PC-3 (cell line): ENCODE measurements at regions of chr7 and their contacts with region 1.

Region 1: DNA sequence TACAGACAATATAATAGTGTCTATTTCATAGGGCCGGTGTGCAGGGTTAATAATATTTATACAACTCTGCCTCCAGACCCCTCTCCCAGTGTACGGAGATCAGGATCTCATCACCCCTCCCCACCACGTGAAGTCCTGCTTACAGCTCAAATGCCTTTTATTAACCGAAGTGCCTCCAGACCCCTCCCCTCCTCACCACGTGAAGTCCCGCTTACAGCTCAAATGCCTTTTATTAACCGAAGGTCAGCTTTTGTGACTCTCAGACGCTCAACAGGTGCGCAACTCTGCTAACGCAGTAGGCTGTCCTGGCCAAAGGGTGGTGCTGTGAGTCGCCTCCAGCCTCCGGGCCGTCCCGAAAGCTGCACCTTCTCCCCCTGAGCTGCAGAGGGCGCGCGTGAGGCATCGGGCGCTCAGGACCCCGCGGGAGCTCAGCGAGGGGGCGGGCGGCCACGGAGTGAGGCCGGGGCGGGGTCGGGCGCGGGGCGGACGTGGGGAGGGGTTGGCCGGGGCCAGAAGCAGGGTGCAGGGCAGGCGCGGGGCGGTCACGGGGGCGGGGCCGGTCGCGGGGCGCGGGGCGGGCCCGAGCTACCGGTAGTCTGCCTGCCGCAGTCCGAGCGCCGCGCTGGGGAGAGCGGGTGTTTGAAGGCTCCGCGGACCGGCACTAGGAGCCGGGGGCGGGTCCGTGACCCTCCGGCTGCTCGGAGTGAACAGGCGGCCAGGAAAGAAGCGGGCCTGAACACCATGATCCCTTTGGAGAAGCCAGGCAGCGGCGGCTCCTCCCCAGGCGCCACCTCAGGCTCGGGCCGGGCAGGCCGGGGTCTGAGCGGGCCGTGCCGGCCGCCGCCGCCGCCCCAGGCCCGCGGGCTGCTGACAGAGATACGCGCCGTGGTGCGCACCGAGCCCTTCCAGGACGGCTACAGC is at the start of gene STK17A:
- DNase-seq: peak; percentile 92
- ATAC-seq: peak; percentile 72
- H3K4me3 ChIP-seq: peak within 1 kb of the TSS; percentile 95
- H3K27ac ChIP-seq: peak within 1 kb of the TSS; percentile 74
- H3K4me1 ChIP-seq: peaks cover 25% of the 10 kb centered on the region
- H3K27me3 ChIP-seq: no peaks in the 10 kb centered on the region
- CTCF ChIP-seq: peak; percentile 94
- total RNA-seq, gene STK17A: 75.4 and 82.5 TPM in 2 replicates

Region 2: GRCh38 chr7:43071604-43072003 is 511.2 kb before region 1 on chr7:
- CTCF ChIA-PET with region 1: no interaction called
- POLR2A ChIA-PET with region 1: interaction called, 10 read pairs
- intact Hi-C with region 1: no loop called
- DNase-seq: peak; percentile 25
- ATAC-seq: no peak
- H3K4me3 ChIP-seq: no peak overlapping the region
- H3K27ac ChIP-seq: no peak overlapping the region
- H3K4me1 ChIP-seq: no peaks in the 10 kb centered on the region
- H3K27me3 ChIP-seq: no peaks in the 10 kb centered on the region
- CTCF ChIP-seq: peak; percentile 64

Region 3: DNA sequence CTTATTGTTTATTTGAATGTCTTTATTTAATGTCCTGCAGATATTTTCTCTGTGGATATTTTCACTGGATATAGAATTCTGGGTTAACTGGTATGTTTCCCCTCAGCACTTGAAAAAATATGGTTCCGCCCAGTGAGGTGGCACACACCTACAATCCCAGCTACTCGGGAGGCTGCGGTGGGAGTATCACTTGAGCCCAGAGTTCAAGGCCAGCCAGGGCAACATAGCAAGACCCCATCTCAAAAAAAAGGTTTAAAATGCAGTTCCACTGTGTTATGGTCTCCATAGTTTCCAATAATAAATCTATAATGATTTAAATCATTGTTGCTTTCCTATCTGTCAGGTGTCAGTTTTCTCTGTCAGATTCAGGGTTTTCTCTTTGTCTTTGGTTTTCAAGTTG is 165.3 kb before region 1 on chr7:
- CTCF ChIA-PET with region 1: no interaction called
- POLR2A ChIA-PET with region 1: no interaction called
- intact Hi-C with region 1: no loop called
- DNase-seq: no peak
- ATAC-seq: no peak
- H3K4me3 ChIP-seq: no peak overlapping the region
- H3K27ac ChIP-seq: no peak overlapping the region
- H3K4me1 ChIP-seq: no peaks in the 10 kb centered on the region
- H3K27me3 ChIP-seq: no peaks in the 10 kb centered on the region
- CTCF ChIP-seq: no peak

Region 4: DNA sequence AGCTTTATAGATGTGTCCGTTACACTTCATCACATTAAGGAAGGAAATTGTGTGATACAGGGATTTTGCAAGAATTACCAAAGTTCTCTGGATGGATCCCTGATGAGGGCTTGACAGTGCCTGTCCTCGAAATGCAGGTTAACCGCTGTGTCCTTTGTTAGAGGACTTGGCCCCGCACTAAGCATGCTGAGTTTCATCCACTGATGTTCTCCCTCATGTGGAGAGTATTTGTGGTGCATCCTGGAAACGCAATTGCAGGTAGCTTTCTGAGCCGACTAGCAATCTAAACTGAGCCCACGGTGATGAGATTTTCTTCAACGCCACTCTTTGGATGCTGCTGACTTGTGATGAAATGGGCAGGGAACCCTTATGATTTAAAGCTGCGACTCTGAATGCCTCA is 71.7 kb before region 1 on chr7:
- CTCF ChIA-PET with region 1: no interaction called
- POLR2A ChIA-PET with region 1: no interaction called
- intact Hi-C with region 1: no loop called
- DNase-seq: peak; percentile 15
- ATAC-seq: no peak
- H3K4me3 ChIP-seq: no peak overlapping the region
- H3K27ac ChIP-seq: no peak overlapping the region
- H3K4me1 ChIP-seq: no peaks in the 10 kb centered on the region
- H3K27me3 ChIP-seq: no peaks in the 10 kb centered on the region
- CTCF ChIP-seq: peak; percentile 23; the same call in 1 of the 2 replicates

Region 5: GRCh38 chr7:43612599-43613589 is 30.1 kb after region 1 on chr7:
- CTCF ChIA-PET with region 1: interaction called, 8 read pairs
- POLR2A ChIA-PET with region 1: interaction called, 35 read pairs
- intact Hi-C with region 1: loop called (anchors 2 kb)
- DNase-seq: no peak
- ATAC-seq: no peak
- H3K4me3 ChIP-seq: no peak overlapping the region
- H3K27ac ChIP-seq: no peak overlapping the region
- H3K4me1 ChIP-seq: peaks cover 8% of the 10 kb centered on the region
- H3K27me3 ChIP-seq: no peaks in the 10 kb centered on the region
- CTCF ChIP-seq: no peak

Region 6: GRCh38 chr7:43639858-43640491 is 57.2 kb after region 1 on chr7:
- CTCF ChIA-PET with region 1: interaction called, 11 read pairs
- POLR2A ChIA-PET with region 1: interaction called, 13 read pairs
- intact Hi-C with region 1: no loop called
- DNase-seq: peak; percentile 50
- ATAC-seq: peak; percentile 41
- H3K4me3 ChIP-seq: no peak overlapping the region
- H3K27ac ChIP-seq: peak overlapping the region; percentile 55
- H3K4me1 ChIP-seq: peaks cover 27% of the 10 kb centered on the region
- H3K27me3 ChIP-seq: no peaks in the 10 kb centered on the region
- CTCF ChIP-seq: no peak

Region 7: DNA sequence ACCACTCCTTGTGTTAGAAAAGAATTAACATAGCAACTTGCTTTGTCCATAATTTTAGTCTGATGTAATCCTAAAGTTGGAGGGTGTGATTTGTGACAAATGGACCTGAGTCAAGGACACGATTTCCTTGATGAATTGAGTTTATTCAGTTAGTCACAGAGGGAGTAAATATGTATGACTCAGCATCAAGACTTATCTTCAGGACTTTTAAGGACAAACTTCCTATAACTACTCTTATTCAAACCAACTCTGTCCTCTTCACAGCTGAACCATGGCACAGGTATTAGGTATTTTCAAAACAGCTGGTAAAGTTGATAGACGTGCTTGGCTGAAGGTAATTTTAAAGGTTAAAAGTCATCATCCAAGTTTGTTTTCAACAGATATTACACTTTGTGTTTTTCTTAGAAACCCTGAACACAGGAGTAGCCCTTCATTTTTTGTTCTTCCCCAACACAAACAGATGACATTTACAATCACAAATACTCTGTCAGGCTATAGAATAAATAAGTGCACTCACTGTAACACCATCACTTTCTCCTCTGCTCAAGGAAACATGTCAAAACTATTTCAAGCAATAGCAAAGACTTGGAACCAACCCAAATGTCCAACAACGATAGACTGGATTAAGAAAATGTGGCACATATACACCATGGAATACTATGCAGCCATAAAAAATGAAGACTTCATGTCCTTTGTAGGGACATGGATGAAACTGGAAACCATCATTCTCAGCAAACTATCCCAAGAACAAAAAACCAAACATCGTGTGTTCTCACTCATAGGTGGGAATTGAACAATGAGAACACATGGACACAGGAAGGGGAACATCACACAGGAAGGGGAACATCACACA is 92.0 kb after region 1 on chr7:
- CTCF ChIA-PET with region 1: interaction called, 7 read pairs
- POLR2A ChIA-PET with region 1: interaction called, 5 read pairs
- intact Hi-C with region 1: loop called (anchors 1 kb)
- DNase-seq: peak; percentile 90
- ATAC-seq: peak; percentile 98
- H3K4me3 ChIP-seq: no peak overlapping the region
- H3K27ac ChIP-seq: peak overlapping the region; percentile 78
- H3K4me1 ChIP-seq: peaks cover 13% of the 10 kb centered on the region
- H3K27me3 ChIP-seq: no peaks in the 10 kb centered on the region
- CTCF ChIP-seq: no peak

Region 8: DNA sequence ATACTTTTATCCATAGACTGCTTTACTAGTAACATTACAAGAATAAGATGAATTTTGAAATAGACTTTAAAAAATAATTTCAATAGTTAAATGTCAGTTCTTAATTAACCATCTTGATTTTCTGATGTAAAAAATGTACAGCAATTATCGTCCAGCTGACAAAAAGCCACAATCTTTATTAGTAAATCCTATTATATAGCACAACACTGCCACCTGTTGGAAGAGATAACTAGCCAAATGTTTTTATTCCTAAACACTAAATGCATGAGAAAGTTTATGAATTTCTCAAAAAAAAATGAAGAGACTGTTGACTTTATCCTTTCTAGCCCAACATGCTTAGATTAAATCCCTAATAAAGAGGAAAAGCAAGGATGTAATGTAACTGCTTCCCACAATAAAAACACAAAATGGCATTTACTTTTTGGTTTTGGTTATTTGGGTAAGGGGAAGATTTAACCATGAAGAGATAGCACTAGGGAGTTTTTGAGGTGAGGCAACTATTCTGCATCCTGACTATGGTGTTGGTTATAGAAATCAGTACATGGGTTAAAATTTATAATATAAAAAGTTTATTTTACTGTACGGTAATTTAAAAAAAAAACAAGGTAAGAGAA is 138.5 kb after region 1 on chr7:
- CTCF ChIA-PET with region 1: interaction called, 50 read pairs
- POLR2A ChIA-PET with region 1: interaction called, 20 read pairs
- intact Hi-C with region 1: loop called (anchors 1 kb)
- DNase-seq: peak; percentile 69
- ATAC-seq: 0 out of 2 replicates have a peak, but pooled peaks have one; percentile 29
- H3K4me3 ChIP-seq: no peak overlapping the region
- H3K27ac ChIP-seq: no peak overlapping the region
- H3K4me1 ChIP-seq: peaks cover 7% of the 10 kb centered on the region
- H3K27me3 ChIP-seq: no peaks in the 10 kb centered on the region
- CTCF ChIP-seq: peak; percentile 80

Region 9: DNA sequence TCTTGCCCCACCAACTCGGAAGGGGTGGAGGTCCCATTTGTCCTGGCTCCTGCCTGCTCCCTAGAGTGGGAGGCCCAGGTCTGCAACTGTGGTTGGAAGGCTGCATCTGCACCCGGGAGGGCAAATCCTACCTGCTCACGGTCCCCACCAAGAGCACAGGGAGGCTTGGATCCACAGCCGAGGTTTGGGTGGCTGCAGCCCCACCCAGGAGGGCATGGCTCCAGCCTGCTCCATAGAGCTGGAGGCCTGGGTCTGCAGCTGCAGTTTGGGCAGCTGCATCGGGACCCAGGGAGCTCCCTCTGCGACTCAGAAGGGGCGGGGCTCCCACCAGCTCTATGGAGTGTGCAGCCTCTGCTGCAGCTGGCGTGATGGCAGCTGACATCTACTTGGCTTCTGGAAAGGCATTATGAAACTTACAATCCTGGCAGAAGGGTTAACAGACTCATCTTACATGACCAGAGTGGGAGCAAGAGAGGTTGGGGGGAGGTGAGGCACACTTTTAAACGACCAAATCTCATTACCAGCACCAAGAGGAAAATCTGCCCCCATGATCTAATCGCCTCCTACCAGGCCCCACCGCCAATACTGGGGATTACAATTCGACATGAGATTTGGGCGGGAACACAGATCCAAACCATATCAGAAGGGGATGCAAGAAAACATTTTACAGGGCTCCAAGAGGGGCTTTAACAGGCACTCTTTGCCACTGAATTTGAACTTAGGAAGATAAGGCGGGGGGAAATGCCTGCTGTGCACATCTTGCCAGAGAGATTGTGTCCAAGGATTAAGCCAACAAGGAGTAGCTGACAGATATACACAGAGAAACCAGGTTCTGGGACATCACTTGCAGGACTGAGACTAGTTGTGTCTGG is 167.5 kb after region 1 on chr7:
- CTCF ChIA-PET with region 1: no interaction called
- POLR2A ChIA-PET with region 1: no interaction called
- intact Hi-C with region 1: no loop called
- DNase-seq: no peak
- ATAC-seq: no peak
- H3K4me3 ChIP-seq: no peak overlapping the region
- H3K27ac ChIP-seq: no peak overlapping the region
- H3K4me1 ChIP-seq: peaks cover 7% of the 10 kb centered on the region; the same call in 1 of the 2 replicates
- H3K27me3 ChIP-seq: no peaks in the 10 kb centered on the region
- CTCF ChIP-seq: no peak

Region 10: DNA sequence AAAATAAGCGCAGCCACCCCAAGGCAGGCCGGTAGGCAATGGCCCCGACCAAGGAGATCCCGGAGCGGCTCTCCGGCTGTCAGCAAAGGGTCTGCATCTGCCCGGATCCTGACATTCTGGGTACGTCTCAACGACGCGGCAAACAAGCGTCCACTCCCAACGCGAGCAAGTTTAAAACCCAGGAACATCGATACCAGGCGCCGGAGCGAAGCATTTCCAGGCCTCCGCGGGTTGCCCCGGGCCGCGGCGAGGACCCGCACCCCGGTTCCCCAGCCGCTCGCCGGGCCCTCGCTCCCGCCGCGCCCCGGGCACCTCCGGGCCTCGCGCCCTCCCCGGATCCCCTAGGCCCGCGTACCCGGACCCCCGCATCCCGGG is 323.2 kb after region 1 on chr7:
- CTCF ChIA-PET with region 1: no interaction called
- POLR2A ChIA-PET with region 1: interaction called, 10 read pairs
- intact Hi-C with region 1: no loop called
- DNase-seq: peak; percentile 14
- ATAC-seq: peak; percentile 42
- H3K4me3 ChIP-seq: peak overlapping the region; percentile 76
- H3K27ac ChIP-seq: peak overlapping the region; percentile 50
- H3K4me1 ChIP-seq: peaks cover 26% of the 10 kb centered on the region
- H3K27me3 ChIP-seq: no peaks in the 10 kb centered on the region
- CTCF ChIP-seq: no peak